ENCODE measurements at regions of chr11 and their contacts with region 1.

Region 1: GRCh38 chr11:45885274-45885920 is at the start of gene MAPK8IP1:
- DNase-seq: peak; percentile 77
- ATAC-seq: peak; percentile 91
- H3K4me3 ChIP-seq: peak within 1 kb of the TSS in 4 of 5 experiments; percentile 32 to 59 (median 50)
- H3K4me3 Mint-ChIP-seq: peak within 1 kb of the TSS; percentile 82
- H3K27ac ChIP-seq: no peak within 1 kb of the TSS
- H3K27ac Mint-ChIP-seq: peak within 1 kb of the TSS; percentile 77
- H3K4me1 ChIP-seq: peaks cover 11 to 12% of the 10 kb centered on the region in 2 donors
- H3K4me1 Mint-ChIP-seq: peaks cover 12% of the 10 kb centered on the region
- H3K27me3 ChIP-seq: peaks cover 0 to 13% (median 0%) of the 10 kb centered on the region in 4 experiments
- H3K27me3 Mint-ChIP-seq: no peaks in the 10 kb centered on the region
- CTCF ChIP-seq: no peak
- total RNA-seq, gene MAPK8IP1: 1.4 and 2.1 TPM in 2 replicates

Region 2: DNA sequence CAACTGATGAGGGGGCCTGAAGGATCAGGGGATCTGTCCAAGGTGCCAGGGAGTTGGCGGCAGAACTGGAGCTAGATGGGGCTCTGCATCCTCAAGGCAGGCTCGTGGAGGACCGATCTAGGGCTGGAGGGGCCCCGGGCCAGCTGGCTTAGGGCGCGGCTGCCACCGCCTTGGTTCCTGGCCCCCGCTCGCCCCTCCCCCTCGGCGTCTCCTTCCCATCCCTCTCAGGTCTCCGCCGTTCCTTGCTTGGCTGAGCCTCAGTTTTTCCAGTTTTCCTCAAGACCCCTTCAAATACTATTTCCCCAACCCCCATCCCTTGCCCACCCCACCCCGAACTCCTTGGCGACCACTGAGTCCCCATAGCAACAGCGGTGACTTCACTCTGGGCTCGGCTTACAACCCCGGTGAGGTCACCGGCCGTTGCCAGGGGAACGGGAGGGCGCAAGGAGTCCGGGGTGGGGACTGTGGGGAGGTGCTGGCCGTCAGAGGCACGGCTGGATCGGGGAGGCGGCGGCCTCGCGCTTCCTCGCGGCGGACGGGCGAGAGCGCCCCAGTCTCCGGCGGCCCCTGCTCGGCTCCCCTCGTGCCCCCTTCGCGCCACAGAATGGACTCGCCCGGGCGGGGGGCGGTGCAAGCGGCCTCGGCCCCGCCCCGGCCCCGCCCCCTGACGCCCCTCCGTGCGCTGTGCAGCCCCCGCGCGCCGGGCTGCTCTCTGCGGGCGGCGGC is 14.2 kb after region 1 on chr11:
- CTCF ChIA-PET with region 1: no interaction called
- POLR2A ChIA-PET with region 1: no interaction called
- intact Hi-C with region 1: loop called (anchors 1 kb)
- DNase-seq: peak; percentile 89
- ATAC-seq: peak; percentile 82
- H3K4me3 ChIP-seq: peak overlapping the region in 4 of 5 experiments; percentile 37 to 59 (median 50)
- H3K4me3 Mint-ChIP-seq: peak overlapping the region; percentile 81
- H3K27ac ChIP-seq: peak overlapping the region in 1 of 2 donors; percentile 43
- H3K27ac Mint-ChIP-seq: peak overlapping the region; percentile 37
- H3K4me1 ChIP-seq: peaks cover 12 to 17% of the 10 kb centered on the region in 2 donors
- H3K4me1 Mint-ChIP-seq: peaks cover 12% of the 10 kb centered on the region
- H3K27me3 ChIP-seq: peaks cover 0 to 43% (median 21%) of the 10 kb centered on the region in 4 experiments
- H3K27me3 Mint-ChIP-seq: peaks cover 23% of the 10 kb centered on the region
- CTCF ChIP-seq: no peak